MCF 10A (cell line): ENCODE measurements at regions of chr11 and their contacts with region 1.

Region 1: DNA sequence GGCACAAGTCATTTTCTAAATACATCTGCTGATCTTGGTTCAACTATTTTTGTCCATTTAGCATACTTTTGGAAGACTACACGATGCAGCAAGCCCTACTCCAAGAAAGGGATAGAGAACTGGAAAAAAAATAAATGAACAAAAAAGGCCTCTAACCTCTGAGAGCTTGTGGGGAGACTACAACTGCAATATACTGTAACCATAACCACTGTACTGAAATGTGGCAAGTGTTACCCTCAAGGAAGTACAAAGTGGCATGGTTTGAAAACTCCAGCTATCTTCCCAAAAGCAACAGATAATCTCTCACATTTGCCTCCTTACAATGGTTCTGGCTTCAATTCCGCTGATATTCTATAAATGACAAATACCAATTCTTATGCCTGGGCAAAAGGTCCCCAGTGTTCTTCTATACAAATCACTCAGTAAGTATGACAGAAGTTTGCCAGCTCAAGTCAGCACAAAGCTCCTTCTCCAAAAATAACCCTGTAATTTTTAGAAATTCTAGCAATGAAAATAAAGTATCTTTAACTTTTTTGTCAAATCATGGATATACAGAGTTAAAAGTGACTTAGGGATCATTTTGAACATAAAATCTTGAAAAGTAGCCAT is 22.9 kb downstream of the AMBRA1 start:
- DNase-seq: no peak
- H3K4me3 Mint-ChIP-seq: no peak overlapping the region
- H3K27ac Mint-ChIP-seq: no peak overlapping the region
- H3K4me1 Mint-ChIP-seq: no peaks in the 10 kb centered on the region
- H3K27me3 Mint-ChIP-seq: no peaks in the 10 kb centered on the region
- CTCF ChIP-seq: no peak

Region 2: GRCh38 chr11:46560300-46560991 is 10.4 kb before region 1 on chr11:
- CTCF ChIA-PET with region 1: interaction called, 3 read pairs
- POLR2A ChIA-PET with region 1: interaction called, 21 read pairs
- intact Hi-C with region 1: no loop called
- DNase-seq: peak; percentile 54
- H3K4me3 Mint-ChIP-seq: peak overlapping the region; percentile 76
- H3K27ac Mint-ChIP-seq: peak overlapping the region; percentile 94
- H3K4me1 Mint-ChIP-seq: peaks cover 39% of the 10 kb centered on the region
- H3K27me3 Mint-ChIP-seq: no peaks in the 10 kb centered on the region
- CTCF ChIP-seq: no peak

Region 3: DNA sequence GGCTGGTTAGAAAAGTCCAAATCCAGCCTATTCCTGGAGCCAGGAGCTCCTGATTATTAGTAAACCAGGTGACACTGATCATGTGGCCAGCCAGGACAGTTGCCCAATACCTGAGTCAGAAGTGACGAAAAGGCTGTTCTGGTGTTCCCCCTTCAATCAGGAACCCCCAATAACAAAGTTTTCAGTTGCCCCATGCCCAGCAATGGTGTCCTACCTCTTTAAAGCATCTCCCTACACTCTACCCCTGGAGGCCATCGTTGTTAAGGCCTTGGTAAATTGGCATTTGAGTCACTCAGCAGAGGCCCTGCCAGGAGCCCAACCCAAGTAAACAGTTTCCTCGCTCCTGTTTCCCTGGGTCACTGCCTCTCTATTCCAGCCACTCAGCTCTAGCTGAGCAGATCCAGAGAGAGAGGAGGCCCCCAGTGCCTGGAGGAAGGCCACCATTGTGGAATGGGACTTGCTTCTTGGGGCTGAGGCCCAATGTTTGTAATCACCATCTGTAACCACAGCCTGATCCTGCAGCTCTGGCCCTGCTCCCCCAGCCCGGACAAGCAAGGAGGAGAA is 104.5 kb after region 1 on chr11:
- CTCF ChIA-PET with region 1: no interaction called
- POLR2A ChIA-PET with region 1: no interaction called
- intact Hi-C with region 1: no loop called
- DNase-seq: peak; percentile 71
- H3K4me3 Mint-ChIP-seq: no peak overlapping the region
- H3K27ac Mint-ChIP-seq: peak overlapping the region; percentile 97
- H3K4me1 Mint-ChIP-seq: peaks cover 14% of the 10 kb centered on the region
- H3K27me3 Mint-ChIP-seq: no peaks in the 10 kb centered on the region
- CTCF ChIP-seq: peak; percentile 10

Region 4: GRCh38 chr11:46718155-46719019 is 147.5 kb after region 1 on chr11:
- CTCF ChIA-PET with region 1: no interaction called
- POLR2A ChIA-PET with region 1: no interaction called
- intact Hi-C with region 1: no loop called
- DNase-seq: no peak
- H3K4me3 Mint-ChIP-seq: no peak overlapping the region
- H3K27ac Mint-ChIP-seq: no peak overlapping the region
- H3K4me1 Mint-ChIP-seq: no peaks in the 10 kb centered on the region
- H3K27me3 Mint-ChIP-seq: no peaks in the 10 kb centered on the region
- CTCF ChIP-seq: no peak